ENCODE measurements at regions of chrX and their contacts with region 1.

Region 1: DNA sequence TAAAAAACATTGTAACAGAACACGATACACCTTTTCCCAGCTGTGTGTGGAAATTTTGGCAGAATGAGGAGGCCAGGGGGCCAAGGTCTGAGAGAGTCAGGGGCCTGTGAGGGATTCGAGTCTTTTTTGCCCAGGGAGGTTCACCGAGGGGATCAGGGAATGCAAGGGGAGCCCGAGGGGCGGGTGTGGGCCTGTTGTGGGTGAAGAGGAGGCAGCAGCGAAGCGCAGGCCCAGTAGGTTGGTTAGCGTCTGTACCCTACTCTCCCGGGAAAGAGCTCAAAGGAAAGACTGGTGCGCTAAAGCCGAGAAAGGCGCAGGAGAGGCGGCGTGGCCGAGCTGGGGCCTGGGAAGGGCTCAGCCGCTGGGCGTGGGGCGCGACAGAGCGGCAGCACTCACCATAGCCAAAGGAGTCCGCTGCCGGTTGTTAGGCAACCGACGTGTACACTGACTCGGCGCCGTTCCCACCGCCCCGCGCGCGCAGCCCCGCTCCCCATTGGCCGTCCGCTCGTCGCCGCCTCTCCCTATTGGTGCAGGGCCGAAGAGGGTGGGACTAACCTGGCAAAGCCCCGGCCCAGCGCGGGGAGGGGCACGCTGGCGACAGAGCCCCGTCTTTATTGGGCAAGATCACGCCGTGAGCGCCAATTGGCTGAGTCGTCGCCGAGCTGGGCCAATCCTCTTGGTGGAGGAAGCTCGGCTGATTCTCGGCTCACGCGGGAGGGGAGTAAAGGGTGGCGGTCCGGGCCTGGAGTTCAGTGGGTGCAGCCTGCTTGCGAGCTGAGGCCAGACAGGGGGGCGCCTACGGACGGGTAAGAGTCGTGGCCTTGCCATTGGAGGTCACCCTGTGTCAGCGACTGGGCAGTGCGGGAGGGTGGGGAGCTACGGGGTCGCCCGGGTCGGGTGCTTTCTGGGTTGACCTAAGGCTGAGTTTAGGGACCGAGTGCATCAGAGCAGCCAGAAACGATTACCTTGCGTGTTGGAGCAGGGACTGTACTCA is at the starts of genes CETN2 and NSDHL:
- DNase-seq: peak; percentile 89
- ATAC-seq: peak; percentile 99
- H3K4me3 ChIP-seq: peak within 1 kb of the TSS; percentile 93 to 96
- H3K27ac ChIP-seq: peak within 1 kb of the TSS; percentile 93
- H3K4me1 ChIP-seq: peaks cover 13% of the 10 kb centered on the region; the same call in 1 of the 2 replicates
- H3K27me3 ChIP-seq: no peaks in the 10 kb centered on the region
- CTCF ChIP-seq: no peak
- total RNA-seq, gene CETN2: 63.3 TPM
- total RNA-seq, gene NSDHL: 75.0 TPM

Region 2: GRCh38 chrX:152847281-152847680 is 16.7 kb after region 1 on chrX:
- CTCF ChIA-PET with region 1: no interaction called
- POLR2A ChIA-PET with region 1: interaction called, 12 read pairs
- in situ Hi-C with region 1: no loop called
- intact Hi-C with region 1: no loop called
- DNase-seq: no peak
- ATAC-seq: no peak
- H3K4me3 ChIP-seq: no peak overlapping the region
- H3K27ac ChIP-seq: no peak overlapping the region
- H3K4me1 ChIP-seq: no peaks in the 10 kb centered on the region
- H3K27me3 ChIP-seq: no peaks in the 10 kb centered on the region
- CTCF ChIP-seq: no peak

Region 3: GRCh38 chrX:152904151-152905080 is 73.8 kb after region 1 on chrX:
- CTCF ChIA-PET with region 1: no interaction called
- POLR2A ChIA-PET with region 1: no interaction called
- in situ Hi-C with region 1: no loop called
- intact Hi-C with region 1: no loop called
- DNase-seq: no peak
- ATAC-seq: peak; percentile 85
- H3K4me3 ChIP-seq: no peak overlapping the region
- H3K27ac ChIP-seq: no peak overlapping the region
- H3K4me1 ChIP-seq: peaks cover 3% of the 10 kb centered on the region; the same call in 1 of the 2 replicates
- H3K27me3 ChIP-seq: no peaks in the 10 kb centered on the region
- CTCF ChIP-seq: no peak

Region 4: GRCh38 chrX:152969548-152969947 is 138.9 kb after region 1 on chrX:
- CTCF ChIA-PET with region 1: no interaction called
- POLR2A ChIA-PET with region 1: no interaction called
- in situ Hi-C with region 1: no loop called
- intact Hi-C with region 1: no loop called
- DNase-seq: no peak
- ATAC-seq: no peak
- H3K4me3 ChIP-seq: no peak overlapping the region
- H3K27ac ChIP-seq: no peak overlapping the region
- H3K4me1 ChIP-seq: no peaks in the 10 kb centered on the region
- H3K27me3 ChIP-seq: no peaks in the 10 kb centered on the region
- CTCF ChIP-seq: no peak